Caco-2 (cell line): ENCODE measurements at regions of chr11 and their contacts with region 1.

Region 1: GRCh38 chr11:22920939-22921565 is 60.8 kb upstream of the CCDC179 start:
- DNase-seq: peak; percentile 49 to 50
- H3K4me3 ChIP-seq: no peak overlapping the region
- H3K4me3 Mint-ChIP-seq: no peak overlapping the region
- H3K27ac Mint-ChIP-seq: no peak overlapping the region
- H3K4me1 ChIP-seq: peaks cover 20% of the 10 kb centered on the region
- H3K4me1 Mint-ChIP-seq: peaks cover 17% of the 10 kb centered on the region
- H3K27me3 ChIP-seq: no peaks in the 10 kb centered on the region
- H3K27me3 Mint-ChIP-seq: no peaks in the 10 kb centered on the region
- CTCF ChIP-seq: peak; percentile 56 to 85

Region 2: DNA sequence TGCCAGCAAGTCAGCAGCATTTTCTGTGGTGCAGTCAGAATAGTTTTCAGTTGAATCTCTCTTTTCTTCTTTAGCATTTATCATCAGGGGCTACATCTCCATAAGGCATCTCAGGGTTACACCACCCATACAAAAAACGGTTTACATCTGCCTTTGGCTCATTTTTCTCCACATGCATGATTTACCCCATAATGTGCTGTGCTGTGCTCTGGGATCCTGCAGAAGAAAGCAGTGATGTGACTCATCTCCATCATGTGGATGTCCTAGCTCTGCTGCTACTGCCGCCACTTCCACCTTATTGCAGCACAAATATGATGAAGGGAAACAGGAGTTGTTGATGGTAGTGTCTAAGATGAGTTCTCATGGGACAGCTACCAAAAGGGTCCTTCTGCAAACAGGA is 30.8 kb before region 1 on chr11:
- CTCF ChIA-PET with region 1: no interaction called
- POLR2A ChIA-PET with region 1: no interaction called
- intact Hi-C with region 1: no loop called
- DNase-seq: no peak
- H3K4me3 ChIP-seq: no peak overlapping the region
- H3K4me3 Mint-ChIP-seq: no peak overlapping the region
- H3K27ac Mint-ChIP-seq: no peak overlapping the region
- H3K4me1 ChIP-seq: no peaks in the 10 kb centered on the region
- H3K4me1 Mint-ChIP-seq: no peaks in the 10 kb centered on the region
- H3K27me3 ChIP-seq: no peaks in the 10 kb centered on the region
- H3K27me3 Mint-ChIP-seq: no peaks in the 10 kb centered on the region
- CTCF ChIP-seq: no peak

Region 3: GRCh38 chr11:22974251-22974650 is 53.2 kb after region 1 on chr11:
- CTCF ChIA-PET with region 1: no interaction called
- POLR2A ChIA-PET with region 1: no interaction called
- intact Hi-C with region 1: no loop called
- DNase-seq: no peak
- H3K4me3 ChIP-seq: no peak overlapping the region
- H3K4me3 Mint-ChIP-seq: no peak overlapping the region
- H3K27ac Mint-ChIP-seq: no peak overlapping the region
- H3K4me1 ChIP-seq: no peaks in the 10 kb centered on the region
- H3K4me1 Mint-ChIP-seq: no peaks in the 10 kb centered on the region
- H3K27me3 ChIP-seq: no peaks in the 10 kb centered on the region
- H3K27me3 Mint-ChIP-seq: no peaks in the 10 kb centered on the region
- CTCF ChIP-seq: no peak

Region 4: DNA sequence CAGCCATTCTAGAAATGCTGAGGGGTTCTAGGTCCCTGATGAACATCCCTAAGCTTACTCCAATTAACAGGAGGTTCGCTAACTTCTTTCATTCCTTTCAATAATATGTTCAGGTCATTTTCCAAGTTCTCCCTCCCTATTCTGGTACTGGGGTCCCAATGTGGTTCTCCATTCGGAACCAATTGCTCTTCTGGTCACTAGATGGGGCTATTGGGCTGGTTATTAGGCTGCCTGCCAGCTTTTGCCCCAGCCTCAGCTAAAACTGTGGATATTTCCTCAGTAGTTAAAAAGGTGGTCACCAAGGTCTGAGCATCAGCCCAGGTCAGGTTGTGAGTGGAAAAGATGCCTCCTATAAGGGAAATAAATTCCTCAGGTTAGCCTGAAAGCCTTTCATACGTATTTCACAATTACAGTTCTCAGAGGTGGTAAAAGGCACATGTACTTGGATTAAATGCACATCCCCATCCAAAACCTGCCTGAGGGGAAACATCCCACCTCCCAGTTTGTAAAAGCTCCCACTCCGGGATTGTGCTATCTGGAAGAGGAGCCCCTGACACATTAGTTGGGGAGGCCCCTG is 100.3 kb after region 1 on chr11:
- CTCF ChIA-PET with region 1: no interaction called
- POLR2A ChIA-PET with region 1: no interaction called
- intact Hi-C with region 1: loop called (anchors 1 kb)
- DNase-seq: peak in 1 of 2 experiments; percentile 42
- H3K4me3 ChIP-seq: no peak overlapping the region
- H3K4me3 Mint-ChIP-seq: no peak overlapping the region
- H3K27ac Mint-ChIP-seq: no peak overlapping the region
- H3K4me1 ChIP-seq: no peaks in the 10 kb centered on the region
- H3K4me1 Mint-ChIP-seq: no peaks in the 10 kb centered on the region
- H3K27me3 ChIP-seq: no peaks in the 10 kb centered on the region
- H3K27me3 Mint-ChIP-seq: no peaks in the 10 kb centered on the region
- CTCF ChIP-seq: peak; percentile 74 to 85

Region 5: DNA sequence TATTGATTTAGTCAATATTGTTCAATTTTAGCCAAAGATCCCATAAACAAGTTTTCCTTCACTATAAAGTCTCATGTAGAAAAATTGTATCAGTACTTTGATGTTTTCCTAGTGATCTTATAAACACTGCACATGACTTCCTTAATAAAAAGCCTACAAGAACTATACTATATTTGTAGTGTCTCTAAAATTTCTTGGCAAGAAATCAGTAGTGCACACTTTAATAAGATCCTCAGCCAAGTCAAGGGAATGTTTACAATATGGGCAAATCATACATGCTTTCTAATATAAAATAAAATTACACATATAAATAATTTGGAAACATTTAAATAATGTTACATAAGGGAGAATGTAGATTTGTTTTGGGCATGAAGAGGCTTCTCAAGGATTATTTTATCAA is 142.2 kb after region 1 on chr11:
- CTCF ChIA-PET with region 1: no interaction called
- POLR2A ChIA-PET with region 1: no interaction called
- intact Hi-C with region 1: no loop called
- DNase-seq: no peak
- H3K4me3 ChIP-seq: no peak overlapping the region
- H3K4me3 Mint-ChIP-seq: no peak overlapping the region
- H3K27ac Mint-ChIP-seq: no peak overlapping the region
- H3K4me1 ChIP-seq: no peaks in the 10 kb centered on the region
- H3K4me1 Mint-ChIP-seq: no peaks in the 10 kb centered on the region
- H3K27me3 ChIP-seq: no peaks in the 10 kb centered on the region
- H3K27me3 Mint-ChIP-seq: peaks cover 3% of the 10 kb centered on the region
- CTCF ChIP-seq: no peak